ENCODE measurements at regions of chr17 and their contacts with region 1.

Region 1: GRCh38 chr17:34361478-34362061 is 1.5 kb downstream of the CCL1 start:
- DNase-seq: no peak
- H3K4me3 ChIP-seq: no peak overlapping the region
- H3K27me3 ChIP-seq: peaks cover 4% of the 10 kb centered on the region; the same call in 1 of the 2 replicates
- CTCF ChIP-seq: peak; percentile 100

Region 2: DNA sequence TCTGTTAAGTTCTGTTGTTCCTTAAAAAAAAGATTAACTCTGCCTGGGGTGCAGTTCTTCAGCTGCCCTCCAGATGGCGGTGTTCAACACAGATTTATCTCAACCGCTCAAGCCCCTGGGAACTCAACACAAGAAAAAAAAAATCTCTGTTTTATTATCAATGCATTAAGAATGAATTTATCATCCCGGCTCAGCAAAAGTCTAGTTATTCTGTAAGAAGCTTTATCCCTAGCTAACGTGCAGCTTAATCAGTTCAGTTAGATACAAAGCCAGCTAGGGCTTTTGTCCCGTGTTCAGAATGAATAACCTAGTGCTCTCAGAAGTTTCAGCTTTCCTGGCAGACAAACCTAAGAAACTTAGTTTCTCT is 582.4 kb before region 1 on chr17:
- CTCF ChIA-PET with region 1: interaction called, 10 read pairs
- POLR2A ChIA-PET with region 1: no interaction called
- DNase-seq: peak; percentile 3
- H3K4me3 ChIP-seq: no peak overlapping the region
- H3K27me3 ChIP-seq: no peaks in the 10 kb centered on the region
- CTCF ChIP-seq: peak; percentile 89

Region 3: GRCh38 chr17:34171245-34171818 is 190.2 kb before region 1 on chr17:
- CTCF ChIA-PET with region 1: interaction called, 68 read pairs
- POLR2A ChIA-PET with region 1: no interaction called
- DNase-seq: no peak
- H3K4me3 ChIP-seq: no peak overlapping the region
- H3K27me3 ChIP-seq: peaks cover 3% of the 10 kb centered on the region; the same call in 1 of the 2 replicates
- CTCF ChIP-seq: peak; percentile 91

Region 4: DNA sequence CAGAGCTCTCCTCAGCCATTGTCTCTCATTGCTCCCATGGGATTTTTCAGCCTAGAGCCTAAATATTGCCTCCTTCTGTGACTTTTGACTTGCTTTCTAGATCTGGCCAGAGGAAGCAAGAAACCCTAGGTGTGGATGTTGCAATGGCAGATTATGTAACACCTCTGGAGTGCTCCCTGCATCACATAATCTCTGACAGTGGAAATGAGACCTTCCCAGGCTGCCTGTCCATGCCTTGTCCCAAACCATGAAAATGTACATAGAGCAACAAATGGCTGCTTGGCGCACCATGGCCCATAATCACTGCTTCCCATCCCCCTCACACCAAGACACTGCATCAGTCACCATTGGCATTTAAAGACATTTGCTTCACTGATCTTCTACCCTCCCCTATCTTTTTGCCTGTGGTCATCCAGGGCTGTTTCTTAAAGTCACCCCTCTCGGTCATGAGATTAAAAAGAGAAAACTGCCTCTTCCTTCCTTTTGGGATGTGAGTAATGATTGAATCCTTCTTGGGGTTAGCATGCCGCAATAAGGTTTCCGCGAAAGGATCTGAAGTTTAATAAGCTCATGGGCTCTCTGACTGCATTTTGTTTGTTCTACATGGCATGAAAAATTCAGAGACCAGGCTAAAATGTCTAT is 140.7 kb before region 1 on chr17:
- CTCF ChIA-PET with region 1: interaction called, 24 read pairs
- POLR2A ChIA-PET with region 1: no interaction called
- DNase-seq: no peak
- H3K4me3 ChIP-seq: no peak overlapping the region
- H3K27me3 ChIP-seq: no peaks in the 10 kb centered on the region
- CTCF ChIP-seq: no peak

Region 5: GRCh38 chr17:34254651-34255380 is 106.8 kb before region 1 on chr17 and contains the start of gene CCL2:
- CTCF ChIA-PET with region 1: interaction called, 45 read pairs
- POLR2A ChIA-PET with region 1: no interaction called
- DNase-seq: no peak
- H3K4me3 ChIP-seq: peak within 1 kb of the TSS; percentile 53
- H3K27me3 ChIP-seq: no peaks in the 10 kb centered on the region
- CTCF ChIP-seq: no peak
- polyA plus RNA-seq, gene CCL2: 303 and 386 TPM in 2 replicates

Region 6: DNA sequence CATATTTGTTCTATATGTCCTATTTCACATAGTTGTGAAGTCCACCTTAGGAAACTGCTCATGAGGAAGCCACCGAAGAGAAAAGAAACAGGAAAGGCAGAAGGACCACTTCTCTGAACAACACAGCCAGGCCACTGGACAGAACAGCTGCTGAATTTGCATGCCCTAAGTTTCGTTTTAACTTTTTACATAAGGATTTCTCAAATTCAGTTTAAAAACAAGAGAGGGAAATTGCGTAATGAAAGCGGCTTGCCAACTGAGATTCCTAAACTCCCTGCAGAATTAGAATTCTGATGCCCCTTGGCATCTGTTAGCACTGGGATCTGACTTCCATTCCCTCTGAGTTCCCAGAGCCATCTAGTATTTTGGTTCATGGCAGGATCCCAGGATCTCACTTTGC is 47.3 kb before region 1 on chr17:
- CTCF ChIA-PET with region 1: interaction called, 148 read pairs
- POLR2A ChIA-PET with region 1: no interaction called
- DNase-seq: peak; percentile 31
- H3K4me3 ChIP-seq: no peak overlapping the region
- H3K27me3 ChIP-seq: no peaks in the 10 kb centered on the region
- CTCF ChIP-seq: no peak

Measured in BJ (cell line).